ENCODE measurements at regions of chr1 and their contacts with region 1.

Region 1: DNA sequence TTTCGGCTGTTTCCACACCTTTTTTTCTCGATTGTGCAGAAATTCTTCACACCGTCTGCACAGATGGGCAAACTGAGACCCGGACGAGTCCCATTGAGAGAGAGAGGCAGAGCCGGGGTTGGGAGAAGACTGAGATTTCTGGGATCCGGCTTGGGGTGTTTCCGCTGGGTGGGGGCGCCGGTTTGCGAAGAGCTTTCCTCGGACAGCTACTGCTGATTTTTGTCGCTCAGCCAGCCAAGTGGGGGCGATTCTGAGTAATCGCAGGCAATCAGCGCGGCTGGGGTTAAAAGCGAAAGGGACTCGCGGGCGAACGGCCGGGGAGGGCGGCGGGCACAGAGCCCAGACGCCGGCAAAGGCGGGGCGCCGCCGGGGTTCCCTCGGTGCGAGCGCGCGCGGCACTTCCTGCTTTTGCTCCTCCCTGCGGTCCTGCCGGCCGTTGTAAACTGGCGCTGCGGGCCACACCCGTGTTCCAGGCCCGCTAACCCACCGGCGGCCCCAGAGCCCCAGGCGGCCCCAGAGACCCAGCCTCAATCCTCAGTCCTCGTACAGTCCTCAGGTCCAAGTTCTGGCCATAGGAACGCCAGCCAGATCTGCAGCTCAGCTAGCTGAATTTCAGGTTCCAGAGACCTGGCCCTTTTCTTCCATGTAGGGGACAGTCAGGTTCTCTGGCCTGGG is 32.4 kb upstream of the JUN start:
- DNase-seq: peak; percentile 96
- ATAC-seq: peak; percentile 91

Region 2: GRCh38 chr1:58883037-58883887 is 67.1 kb after region 1 on chr1:
- intact Hi-C with region 1: loop called (anchors 5 kb)
- DNase-seq: peak; percentile 86
- ATAC-seq: peak; percentile 49

Region 3: GRCh38 chr1:58896246-58897183 is 80.3 kb after region 1 on chr1:
- intact Hi-C with region 1: loop called (anchors 2 kb)
- DNase-seq: peak; percentile 83
- ATAC-seq: peak; percentile 81

Region 4: GRCh38 chr1:58982259-58982998 is 166.2 kb after region 1 on chr1:
- intact Hi-C with region 1: loop called (anchors 2 kb)
- DNase-seq: peak; percentile 70
- ATAC-seq: peak; percentile 87